Motor neuron (in vitro differentiated cells): ENCODE measurements at regions of chr13 and their contacts with region 1.

Region 1: DNA sequence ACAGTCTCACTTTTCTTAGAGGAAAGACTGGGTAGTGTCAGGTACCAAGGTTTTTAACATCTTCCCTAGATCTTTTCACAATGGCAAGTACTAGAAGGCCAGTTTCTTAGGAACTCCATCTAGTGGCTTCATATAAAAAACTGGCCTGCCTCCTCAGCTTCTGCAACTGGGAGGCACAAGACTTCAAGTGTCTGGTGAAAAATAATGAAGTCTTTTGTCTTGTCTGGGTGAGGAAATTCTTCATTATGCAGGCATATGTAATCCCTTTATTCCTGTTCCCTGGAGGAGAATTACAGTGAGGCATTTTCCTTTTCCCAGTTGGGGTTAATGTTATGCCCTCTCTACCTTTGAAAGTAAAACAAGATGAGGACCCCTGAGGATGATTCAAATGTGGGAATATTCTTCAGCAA is 300.5 kb downstream of the NALCN start:
- ATAC-seq: peak; percentile 25 to 73 (median 42)
- H3K4me3 ChIP-seq: no peak overlapping the region
- H3K27ac ChIP-seq: no peak overlapping the region
- H3K4me1 ChIP-seq: peaks cover 0 to 8% of the 10 kb centered on the region in 2 donors

Region 2: GRCh38 chr13:99626461-99627082 is 1489.2 kb before region 1 on chr13:
- in situ Hi-C with region 1: loop called in 1 of 9 experiments (anchors 25 kb)
- ATAC-seq: peak in 2 of 8 experiments; percentile 81 to 83
- H3K4me3 ChIP-seq: no peak overlapping the region
- H3K27ac ChIP-seq: no peak overlapping the region
- H3K4me1 ChIP-seq: no peaks in the 10 kb centered on the region

Region 3: DNA sequence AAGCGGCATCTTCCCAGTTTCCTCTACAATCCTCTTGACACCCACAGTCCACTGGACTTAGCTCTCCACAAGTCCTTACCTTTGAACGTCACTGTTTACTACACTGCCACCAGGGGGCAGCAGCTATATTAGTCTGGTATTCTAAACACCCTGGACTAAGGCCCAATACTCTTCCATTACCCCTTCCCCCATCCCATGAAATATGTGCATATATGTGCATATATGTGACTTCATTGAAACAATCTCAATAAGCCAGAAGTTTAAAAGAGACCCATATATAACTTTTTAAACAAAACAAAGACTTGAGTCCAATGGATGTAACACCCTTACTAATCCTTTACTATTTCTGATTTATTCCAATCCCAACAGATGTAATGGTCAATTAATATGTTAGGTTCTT is 542.6 kb before region 1 on chr13:
- in situ Hi-C with region 1: loop called in 1 of 9 experiments (anchors 25 kb)
- ATAC-seq: peak in 4 of 8 experiments; percentile 29 to 99 (median 98)
- H3K4me3 ChIP-seq: no peak overlapping the region
- H3K27ac ChIP-seq: no peak overlapping the region
- H3K4me1 ChIP-seq: no peaks in the 10 kb centered on the region

Region 4: DNA sequence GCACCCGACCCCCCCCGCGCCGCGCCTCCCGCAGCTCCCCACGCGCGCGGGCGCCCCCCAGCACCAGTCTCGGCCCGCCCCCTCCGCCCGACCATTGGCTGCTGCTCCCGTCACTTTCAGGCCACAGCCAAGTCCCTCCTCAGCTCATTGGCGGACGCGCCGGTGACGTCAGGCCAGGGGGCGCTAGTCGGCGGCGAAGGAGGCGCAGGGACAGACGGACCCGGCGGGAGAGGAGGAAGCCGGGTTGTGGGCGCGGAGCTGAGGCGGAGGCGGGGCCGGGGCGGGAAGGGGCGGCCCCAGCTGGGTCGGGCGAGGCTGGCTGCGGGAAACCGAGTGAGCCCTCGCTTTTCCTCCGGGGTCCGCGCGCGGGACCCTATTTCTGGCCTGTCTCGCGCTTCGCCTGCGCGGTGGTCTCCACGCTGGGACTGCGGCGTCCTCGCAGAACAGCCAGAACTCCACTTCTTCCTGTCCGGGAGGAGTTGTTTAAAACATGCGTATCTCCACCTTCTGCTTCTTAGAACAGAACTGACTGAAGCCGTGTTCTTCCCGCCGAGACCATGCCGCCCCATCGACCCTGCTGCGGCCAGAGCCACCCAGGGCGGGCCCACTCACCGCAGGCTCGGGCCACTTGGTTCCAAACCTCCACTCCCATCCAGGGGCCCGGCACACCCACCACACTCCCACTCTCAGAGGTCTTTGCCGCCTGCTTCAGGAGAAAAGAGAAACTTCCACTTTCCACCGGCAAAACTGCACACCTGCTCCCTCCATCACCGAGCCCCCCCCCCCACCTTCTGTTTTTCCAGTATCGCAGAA is 440.7 kb before region 1 on chr13:
- in situ Hi-C with region 1: loop called in 3 of 9 experiments (anchors 25 kb)
- ATAC-seq: peak; percentile 84 to 95 (median 90)
- H3K4me3 ChIP-seq: peak overlapping the region; percentile 67 to 80 (median 73)
- H3K27ac ChIP-seq: peak overlapping the region; percentile 76
- H3K4me1 ChIP-seq: peaks cover 13 to 20% of the 10 kb centered on the region in 2 donors

Region 5: GRCh38 chr13:101390461-101390860 is 274.7 kb after region 1 on chr13:
- in situ Hi-C with region 1: no loop called
- ATAC-seq: no peak
- H3K4me3 ChIP-seq: no peak overlapping the region
- H3K27ac ChIP-seq: no peak overlapping the region
- H3K4me1 ChIP-seq: no peaks in the 10 kb centered on the region